CD4-positive, alpha-beta memory T cell (primary cell): ENCODE measurements at regions of chr9 and their contacts with region 1.

Region 1: GRCh38 chr9:134399435-134400056 is 73.3 kb downstream of the RXRA start:
- DNase-seq: no peak
- H3K4me3 ChIP-seq: no peak overlapping the region
- H3K4me3 Mint-ChIP-seq: peak overlapping the region in 1 of 8 donors; percentile 10
- H3K27ac ChIP-seq: no peak overlapping the region
- H3K27ac Mint-ChIP-seq: peak overlapping the region in 4 of 7 donors; percentile 9 to 87 (median 54)
- H3K4me1 ChIP-seq: peaks cover 57% of the 10 kb centered on the region
- H3K4me1 Mint-ChIP-seq: peaks cover 25 to 62% (median 38%) of the 10 kb centered on the region in 4 donors
- H3K27me3 ChIP-seq: no peaks in the 10 kb centered on the region
- H3K27me3 Mint-ChIP-seq: no peaks in the 10 kb centered on the region

Region 2: DNA sequence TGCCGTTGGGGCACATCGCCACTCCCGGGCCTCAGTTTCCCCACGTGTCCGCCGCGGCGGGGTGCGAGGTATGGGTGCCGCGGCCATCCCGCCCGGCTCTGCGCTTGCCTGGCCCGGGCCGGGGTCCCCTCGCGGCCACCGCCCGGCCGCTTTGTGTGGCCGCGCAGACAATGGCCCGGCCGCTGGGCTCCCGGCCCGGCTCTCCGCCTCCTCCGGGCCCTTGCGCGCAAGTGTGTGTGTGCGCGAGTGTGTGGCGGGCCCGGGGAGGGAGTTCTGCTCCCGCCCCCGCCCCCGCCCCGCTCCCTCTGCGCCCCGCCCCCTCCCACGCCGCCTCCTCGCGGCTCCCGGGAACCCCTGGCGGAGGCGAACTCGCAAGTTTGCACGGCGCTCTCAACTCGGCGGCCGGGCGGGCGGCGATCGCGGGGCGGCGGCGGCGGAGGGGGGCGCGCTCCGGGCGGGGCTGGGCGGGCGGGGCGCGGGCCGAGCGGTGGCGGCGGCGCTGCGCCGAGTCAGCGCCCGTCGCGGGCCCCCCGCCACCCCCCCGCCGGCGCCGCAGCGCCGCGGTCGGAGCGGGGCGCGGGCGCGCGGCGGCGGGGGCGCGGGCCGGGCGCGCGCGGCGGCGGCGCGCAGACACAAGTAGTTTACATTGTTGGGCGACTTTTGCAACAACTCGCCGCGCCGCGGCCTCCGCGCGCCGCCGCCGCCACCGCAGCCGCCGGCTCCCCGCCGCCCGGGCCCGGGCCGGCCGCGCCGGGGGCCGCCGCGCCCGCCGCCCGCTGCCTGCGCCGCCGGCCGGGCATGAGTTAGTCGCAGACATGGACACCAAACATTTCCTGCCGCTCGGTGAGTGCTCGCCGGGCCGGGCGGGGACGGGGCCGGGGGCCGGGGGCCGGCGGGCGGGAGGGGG is 73.5 kb before region 1 on chr9 and contains the start of gene RXRA:
- CTCF ChIA-PET with region 1: no interaction called
- POLR2A ChIA-PET with region 1: interaction called, 3 read pairs
- intact Hi-C with region 1: loop called (anchors 5 kb)
- DNase-seq: peak; percentile 63 to 80 (median 68)
- H3K4me3 ChIP-seq: peak within 1 kb of the TSS; percentile 57 to 80
- H3K4me3 Mint-ChIP-seq: peak within 1 kb of the TSS; percentile 73 to 82 (median 80)
- H3K27ac ChIP-seq: peak within 1 kb of the TSS; percentile 45
- H3K27ac Mint-ChIP-seq: peak within 1 kb of the TSS in 4 of 7 donors; percentile 48 to 97 (median 72)
- H3K4me1 ChIP-seq: peaks cover 22% of the 10 kb centered on the region
- H3K4me1 Mint-ChIP-seq: peaks cover 4 to 32% (median 12%) of the 10 kb centered on the region in 4 donors
- H3K27me3 ChIP-seq: no peaks in the 10 kb centered on the region
- H3K27me3 Mint-ChIP-seq: no peaks in the 10 kb centered on the region
- total RNA-seq, gene RXRA: 11.6 to 11.9 TPM